Naive thymus-derived CD4-positive, alpha-beta T cell (primary cell): ENCODE measurements at regions of chr1 and their contacts with region 1.

Region 1: GRCh38 chr1:160711602-160712311 is at the start of gene CD48:
- DNase-seq: peak in 8 of 9 donors; percentile 39 to 88 (median 82)
- ATAC-seq: peak; percentile 67
- H3K4me3 ChIP-seq: peak within 1 kb of the TSS; percentile 90
- H3K4me3 Mint-ChIP-seq: no peak within 1 kb of the TSS
- H3K27ac ChIP-seq: peak within 1 kb of the TSS; percentile 99
- H3K27ac Mint-ChIP-seq: no peak within 1 kb of the TSS
- H3K4me1 ChIP-seq: peaks cover 52 to 60% of the 10 kb centered on the region in 2 donors
- H3K4me1 Mint-ChIP-seq: peaks cover 22 to 49% (median 44%) of the 10 kb centered on the region in 7 donors
- H3K27me3 ChIP-seq: no peaks in the 10 kb centered on the region
- H3K27me3 Mint-ChIP-seq: no peaks in the 10 kb centered on the region
- total RNA-seq, gene CD48: 253 to 438 (median 358) TPM

Region 2: DNA sequence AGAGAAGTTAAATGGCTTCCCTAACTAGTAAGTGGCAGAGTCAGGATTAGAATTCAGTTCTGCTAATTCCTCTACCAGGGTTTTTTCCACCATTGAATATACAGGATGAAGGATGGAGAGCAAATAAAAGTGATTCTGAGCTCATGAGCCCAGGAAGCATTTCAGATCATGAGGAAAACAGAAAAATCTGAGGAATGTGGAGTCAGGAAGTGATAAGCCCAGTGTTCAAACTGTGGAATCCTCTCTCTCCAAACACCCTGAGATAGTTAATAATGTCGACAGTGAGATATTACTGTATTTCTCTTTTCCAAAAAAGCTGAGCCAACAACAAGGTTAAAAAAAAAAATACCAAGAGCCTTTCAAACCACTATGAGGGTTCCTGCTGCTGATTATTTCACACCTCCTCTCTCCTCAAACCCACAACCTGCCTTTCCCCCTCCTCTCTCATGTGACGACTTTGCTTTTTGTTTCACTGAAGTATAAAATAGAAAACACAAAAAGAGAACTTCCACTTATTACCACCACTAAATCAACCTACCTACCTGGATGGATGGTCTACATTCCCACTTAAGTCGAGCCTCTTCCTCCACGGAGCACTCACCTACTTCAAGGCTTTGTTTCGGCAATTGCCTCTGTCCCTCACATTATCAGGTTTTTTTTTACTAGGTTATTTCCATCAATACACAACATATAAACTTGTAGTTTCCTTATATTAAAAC is 73.8 kb before region 1 on chr1:
- CTCF ChIA-PET with region 1: no interaction called
- POLR2A ChIA-PET with region 1: no interaction called
- intact Hi-C with region 1: loop called in 1 of 2 experiments (anchors 2 kb)
- DNase-seq: peak in 7 of 9 donors; percentile 63 to 83 (median 74)
- ATAC-seq: peak; percentile 86
- H3K4me3 ChIP-seq: peak overlapping the region; percentile 39
- H3K4me3 Mint-ChIP-seq: peak overlapping the region; percentile 65 to 100 (median 84)
- H3K27ac ChIP-seq: peak overlapping the region; percentile 75
- H3K27ac Mint-ChIP-seq: peak overlapping the region; percentile 92 to 99 (median 95)
- H3K4me1 ChIP-seq: peaks cover 92 to 96% of the 10 kb centered on the region in 2 donors
- H3K4me1 Mint-ChIP-seq: peaks cover 64 to 100% (median 97%) of the 10 kb centered on the region in 7 donors
- H3K27me3 ChIP-seq: no peaks in the 10 kb centered on the region
- H3K27me3 Mint-ChIP-seq: no peaks in the 10 kb centered on the region

Region 3: GRCh38 chr1:160726498-160727315 is 14.9 kb after region 1 on chr1:
- CTCF ChIA-PET with region 1: interaction called, 46 read pairs
- POLR2A ChIA-PET with region 1: interaction called, 23 read pairs
- intact Hi-C with region 1: loop called (anchors 1 to 2 kb)
- DNase-seq: peak in 8 of 9 donors; percentile 57 to 80 (median 73)
- ATAC-seq: peak; percentile 97
- H3K4me3 ChIP-seq: no peak overlapping the region
- H3K4me3 Mint-ChIP-seq: no peak overlapping the region
- H3K27ac ChIP-seq: no peak overlapping the region
- H3K27ac Mint-ChIP-seq: no peak overlapping the region
- H3K4me1 ChIP-seq: peaks cover 15 to 21% of the 10 kb centered on the region in 2 donors
- H3K4me1 Mint-ChIP-seq: peaks cover 12 to 29% (median 16%) of the 10 kb centered on the region in 7 donors
- H3K27me3 ChIP-seq: no peaks in the 10 kb centered on the region
- H3K27me3 Mint-ChIP-seq: no peaks in the 10 kb centered on the region

Region 4: DNA sequence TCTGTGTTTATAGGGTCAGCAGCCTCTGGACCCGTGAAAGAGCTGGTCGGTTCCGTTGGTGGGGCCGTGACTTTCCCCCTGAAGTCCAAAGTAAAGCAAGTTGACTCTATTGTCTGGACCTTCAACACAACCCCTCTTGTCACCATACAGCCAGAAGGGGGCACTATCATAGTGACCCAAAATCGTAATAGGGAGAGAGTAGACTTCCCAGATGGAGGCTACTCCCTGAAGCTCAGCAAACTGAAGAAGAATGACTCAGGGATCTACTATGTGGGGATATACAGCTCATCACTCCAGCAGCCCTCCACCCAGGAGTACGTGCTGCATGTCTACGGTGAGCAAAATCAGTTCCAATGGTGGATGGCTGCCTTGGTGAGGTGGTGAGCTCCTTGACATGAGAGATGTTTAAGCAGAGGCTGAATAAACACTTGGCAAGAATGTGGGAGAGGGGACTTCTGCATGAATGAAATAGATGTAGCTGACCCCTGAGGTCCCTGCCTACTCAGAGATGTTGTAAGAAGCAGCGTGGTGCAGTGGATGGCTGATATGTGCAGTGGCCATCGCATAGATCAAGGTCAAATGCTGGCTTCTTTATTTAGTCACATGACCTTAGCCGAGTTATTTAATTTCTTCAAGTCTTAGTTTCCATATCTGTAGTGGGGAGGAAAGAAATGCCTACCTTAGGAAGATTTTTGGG is 36.6 kb after region 1 on chr1:
- CTCF ChIA-PET with region 1: interaction called, 3 read pairs
- POLR2A ChIA-PET with region 1: interaction called, 5 read pairs
- intact Hi-C with region 1: loop called in 1 of 2 experiments (anchors 2 kb)
- DNase-seq: no peak
- ATAC-seq: no peak
- H3K4me3 ChIP-seq: no peak overlapping the region
- H3K4me3 Mint-ChIP-seq: no peak overlapping the region
- H3K27ac ChIP-seq: no peak overlapping the region
- H3K27ac Mint-ChIP-seq: peak overlapping the region in 1 of 9 donors; percentile 35
- H3K4me1 ChIP-seq: peaks cover 20 to 83% of the 10 kb centered on the region in 2 donors
- H3K4me1 Mint-ChIP-seq: peaks cover 30 to 78% (median 39%) of the 10 kb centered on the region in 7 donors
- H3K27me3 ChIP-seq: no peaks in the 10 kb centered on the region
- H3K27me3 Mint-ChIP-seq: no peaks in the 10 kb centered on the region